Caco-2 (cell line): ENCODE measurements at regions of chr3 and their contacts with region 1.

Region 1: DNA sequence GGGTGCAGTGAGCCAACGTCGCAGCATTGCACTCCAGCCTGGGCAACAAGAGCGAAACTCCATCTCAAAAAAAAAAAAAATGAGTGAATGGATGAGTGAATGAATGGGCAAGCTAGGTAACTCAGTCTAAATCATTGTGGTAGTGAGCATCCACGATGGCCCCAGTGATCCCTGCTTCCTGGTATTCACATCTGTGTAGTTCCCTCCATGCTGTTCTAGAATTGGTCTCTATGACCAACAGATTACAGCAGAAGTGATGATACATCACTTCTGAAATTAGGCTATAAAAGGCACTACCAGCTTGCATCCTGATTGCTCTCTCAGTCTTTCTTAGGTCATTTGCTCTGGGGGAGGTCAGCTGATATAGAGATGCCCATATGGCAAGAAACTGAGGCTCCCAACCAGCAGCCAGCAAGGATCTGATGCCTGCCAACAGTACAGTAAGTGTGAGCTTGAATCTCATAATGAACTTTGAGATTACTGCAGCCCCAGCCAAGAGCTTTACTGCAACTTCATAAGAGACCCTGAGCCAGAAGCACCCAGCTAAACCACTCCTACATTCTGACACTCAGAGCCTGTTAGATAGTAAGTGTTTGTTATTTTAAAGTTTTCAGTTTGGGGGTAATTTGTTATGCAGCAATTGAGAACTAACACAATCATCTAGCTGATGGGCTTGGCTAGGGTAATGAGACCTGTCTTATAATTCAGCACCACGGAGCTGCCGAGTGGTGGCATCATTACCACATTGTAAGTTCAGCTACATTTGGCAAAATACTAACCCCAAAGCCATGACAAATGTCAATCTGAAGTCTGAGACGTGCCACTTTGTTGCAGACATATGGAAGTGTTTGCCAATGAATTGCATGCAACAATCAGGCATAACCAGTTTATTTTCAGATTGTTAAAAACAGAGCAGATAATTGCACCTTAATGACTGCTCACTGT is 53.0 kb downstream of the KLHL6 start:
- DNase-seq: no peak
- H3K4me3 ChIP-seq: no peak overlapping the region
- H3K4me3 Mint-ChIP-seq: no peak overlapping the region
- H3K27ac Mint-ChIP-seq: no peak overlapping the region
- H3K4me1 ChIP-seq: no peaks in the 10 kb centered on the region
- H3K4me1 Mint-ChIP-seq: no peaks in the 10 kb centered on the region
- H3K27me3 ChIP-seq: no peaks in the 10 kb centered on the region
- H3K27me3 Mint-ChIP-seq: no peaks in the 10 kb centered on the region
- CTCF ChIP-seq: peak in 1 of 2 experiments; percentile 43

Region 2: GRCh38 chr3:183548262-183548769 is 45.8 kb after region 1 on chr3:
- CTCF ChIA-PET with region 1: no interaction called
- POLR2A ChIA-PET with region 1: no interaction called
- intact Hi-C with region 1: loop called (anchors 5 kb)
- DNase-seq: peak; percentile 74 to 86
- H3K4me3 ChIP-seq: no peak overlapping the region
- H3K4me3 Mint-ChIP-seq: no peak overlapping the region
- H3K27ac Mint-ChIP-seq: peak overlapping the region; percentile 56
- H3K4me1 ChIP-seq: peaks cover 25% of the 10 kb centered on the region
- H3K4me1 Mint-ChIP-seq: peaks cover 31% of the 10 kb centered on the region
- H3K27me3 ChIP-seq: no peaks in the 10 kb centered on the region
- H3K27me3 Mint-ChIP-seq: no peaks in the 10 kb centered on the region
- CTCF ChIP-seq: no peak

Region 3: DNA sequence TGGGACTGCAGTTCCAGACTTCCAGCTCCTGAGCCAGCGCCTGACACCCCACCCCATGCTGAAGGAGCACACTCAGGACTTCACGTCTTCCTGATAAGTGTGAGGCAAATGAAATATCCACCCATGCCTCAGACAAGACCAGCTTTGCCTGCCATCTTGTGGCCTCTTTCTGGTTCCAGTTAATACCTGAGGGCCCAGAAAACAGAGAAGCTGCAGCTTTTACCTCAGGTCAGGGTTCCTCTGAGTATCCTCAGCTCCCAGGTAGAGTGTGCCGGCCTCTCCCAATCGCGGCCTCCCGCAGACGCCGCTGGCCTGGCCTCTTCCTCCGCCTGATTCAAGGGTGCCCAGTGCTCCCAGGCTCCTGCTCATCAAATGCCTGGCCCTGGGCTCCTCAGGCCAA is 58.1 kb after region 1 on chr3:
- CTCF ChIA-PET with region 1: interaction called, 13 read pairs
- POLR2A ChIA-PET with region 1: no interaction called
- intact Hi-C with region 1: loop called (anchors 1 kb)
- DNase-seq: peak; percentile 51 to 58
- H3K4me3 ChIP-seq: no peak overlapping the region
- H3K4me3 Mint-ChIP-seq: no peak overlapping the region
- H3K27ac Mint-ChIP-seq: no peak overlapping the region
- H3K4me1 ChIP-seq: peaks cover 9% of the 10 kb centered on the region; the same call in 1 of the 2 replicates
- H3K4me1 Mint-ChIP-seq: peaks cover 9% of the 10 kb centered on the region
- H3K27me3 ChIP-seq: no peaks in the 10 kb centered on the region
- H3K27me3 Mint-ChIP-seq: no peaks in the 10 kb centered on the region
- CTCF ChIP-seq: peak; percentile 39 to 47